ENCODE measurements at regions of chr4 and their contacts with region 1.

Region 1: GRCh38 chr4:125357675-125358074 is 42.9 kb downstream of the FAT4 start:
- DNase-seq: no peak
- ATAC-seq: no peak
- H3K4me3 ChIP-seq: no peak overlapping the region
- H3K27ac ChIP-seq: no peak overlapping the region
- H3K4me1 ChIP-seq: peaks cover 1 to 16% of the 10 kb centered on the region in 2 donors
- H3K27me3 ChIP-seq: no peaks in the 10 kb centered on the region

Region 2: DNA sequence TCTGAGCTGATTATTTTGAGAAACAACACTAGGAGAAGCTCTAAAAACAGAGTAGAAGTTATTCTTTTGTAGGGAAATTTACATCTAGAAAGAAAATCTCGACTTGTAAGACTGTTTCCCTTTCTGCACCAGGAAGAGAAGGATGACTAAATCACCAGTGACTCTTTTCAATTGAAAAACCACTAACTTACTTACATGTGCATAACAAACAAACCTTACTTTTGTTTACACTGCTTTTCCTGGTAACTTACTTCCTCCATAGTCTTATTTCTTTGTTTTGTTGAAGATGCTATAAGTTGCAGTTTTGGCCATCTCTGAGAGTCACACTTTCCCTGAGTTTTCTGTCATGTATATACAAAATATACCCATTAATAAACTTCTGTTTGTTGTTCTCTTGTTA is 336.5 kb before region 1 on chr4:
- intact Hi-C with region 1: no loop called
- DNase-seq: no peak
- ATAC-seq: no peak
- H3K4me3 ChIP-seq: no peak overlapping the region
- H3K27ac ChIP-seq: no peak overlapping the region
- H3K4me1 ChIP-seq: no peaks in the 10 kb centered on the region
- H3K27me3 ChIP-seq: no peaks in the 10 kb centered on the region

Region 3: GRCh38 chr4:125397226-125397625 is 39.6 kb after region 1 on chr4:
- intact Hi-C with region 1: loop called in 1 of 2 experiments (anchors 5 kb)
- DNase-seq: no peak
- ATAC-seq: no peak
- H3K4me3 ChIP-seq: no peak overlapping the region
- H3K27ac ChIP-seq: no peak overlapping the region
- H3K4me1 ChIP-seq: peaks cover 0 to 2% of the 10 kb centered on the region in 2 donors
- H3K27me3 ChIP-seq: no peaks in the 10 kb centered on the region